Motor neuron (in vitro differentiated cells): ENCODE measurements at regions of chr9 and their contacts with region 1.

Region 1: DNA sequence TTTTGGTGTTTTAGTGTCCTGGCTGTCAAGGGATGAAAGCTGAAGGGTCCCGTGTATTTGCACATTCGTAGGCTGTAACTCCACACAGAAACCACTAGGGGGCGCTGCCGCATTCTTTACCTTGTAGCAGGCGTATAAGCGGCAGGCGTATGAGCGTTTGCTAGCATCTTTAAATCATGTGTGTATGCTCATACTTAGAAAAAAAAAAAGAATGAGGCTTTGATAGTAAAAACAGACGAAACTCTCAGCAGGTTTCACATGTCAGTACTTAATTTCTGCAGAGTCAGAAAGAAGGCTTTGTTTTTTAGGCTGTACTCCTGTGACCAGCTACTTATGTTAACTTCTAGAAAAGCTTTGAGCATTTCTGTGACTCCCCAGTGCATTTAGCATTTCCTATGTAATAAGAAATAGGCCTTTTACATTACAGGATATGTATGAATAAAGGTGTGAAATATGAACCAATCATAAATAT is 218.8 kb upstream of the ADAMTSL1 start:
- ATAC-seq: peak; percentile 78 to 95 (median 84)
- H3K4me3 ChIP-seq: no peak overlapping the region
- H3K27ac ChIP-seq: no peak overlapping the region
- H3K4me1 ChIP-seq: no peaks in the 10 kb centered on the region

Region 2: GRCh38 chr9:18442629-18443491 is 187.7 kb after region 1 on chr9:
- in situ Hi-C with region 1: loop called in 2 of 9 experiments (anchors 25 kb)
- ATAC-seq: peak; percentile 90 to 98 (median 94)
- H3K4me3 ChIP-seq: no peak overlapping the region
- H3K27ac ChIP-seq: no peak overlapping the region
- H3K4me1 ChIP-seq: peaks cover 8 to 15% of the 10 kb centered on the region in 2 donors

Region 3: GRCh38 chr9:19022206-19022605 is 767.0 kb after region 1 on chr9:
- in situ Hi-C with region 1: loop called in 7 of 9 experiments (anchors 10 to 25 kb)
- ATAC-seq: no peak
- H3K4me3 ChIP-seq: no peak overlapping the region
- H3K27ac ChIP-seq: no peak overlapping the region
- H3K4me1 ChIP-seq: no peaks in the 10 kb centered on the region

Region 4: DNA sequence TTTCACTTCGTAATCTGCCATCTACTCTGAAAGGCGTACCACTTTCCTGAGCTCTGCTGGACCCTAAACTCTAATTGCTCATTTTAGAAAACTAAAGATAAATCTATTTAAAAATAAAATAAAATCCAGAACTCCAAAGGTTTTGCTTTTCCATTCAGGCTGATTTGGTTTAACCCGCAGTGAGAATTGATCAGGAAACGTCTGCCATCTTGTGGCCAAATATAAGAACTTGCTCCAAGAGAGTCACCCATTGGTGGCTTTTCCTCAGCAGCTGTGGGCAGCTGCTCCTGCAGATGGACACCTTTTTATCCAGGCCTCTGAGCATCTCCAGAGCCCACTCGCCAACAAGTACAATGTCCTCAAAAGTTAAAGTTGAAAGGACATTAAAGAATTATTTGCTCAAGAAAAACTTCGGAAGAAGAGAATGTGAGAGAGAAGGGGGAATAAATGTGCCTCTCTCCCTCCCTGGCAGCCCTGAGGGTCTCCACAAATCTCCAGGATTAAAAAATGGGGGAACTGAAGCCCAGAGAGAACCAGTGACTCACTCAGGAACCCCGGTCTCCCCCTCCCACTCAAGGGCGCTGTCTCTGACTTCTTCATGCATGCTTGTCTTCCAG is 773.7 kb after region 1 on chr9:
- in situ Hi-C with region 1: loop called in 7 of 9 experiments (anchors 10 to 25 kb)
- ATAC-seq: peak in 7 of 8 experiments; percentile 49 to 86 (median 61)
- H3K4me3 ChIP-seq: no peak overlapping the region
- H3K27ac ChIP-seq: no peak overlapping the region
- H3K4me1 ChIP-seq: no peaks in the 10 kb centered on the region

Region 5: GRCh38 chr9:19048966-19049916 is 794.0 kb after region 1 on chr9 and contains the start of gene RRAGA:
- in situ Hi-C with region 1: loop called in 5 of 9 experiments (anchors 25 kb)
- ATAC-seq: peak; percentile 84 to 93 (median 91)
- H3K4me3 ChIP-seq: peak within 1 kb of the TSS; percentile 72 to 91 (median 76)
- H3K27ac ChIP-seq: peak within 1 kb of the TSS; percentile 91 to 96
- H3K4me1 ChIP-seq: peaks cover 14 to 26% of the 10 kb centered on the region in 2 donors
- total RNA-seq, gene RRAGA: 34.9 to 68.4 (median 52.3) TPM